K562 (cell line): ENCODE measurements at regions of chr22 and their contacts with region 1.

Region 1: DNA sequence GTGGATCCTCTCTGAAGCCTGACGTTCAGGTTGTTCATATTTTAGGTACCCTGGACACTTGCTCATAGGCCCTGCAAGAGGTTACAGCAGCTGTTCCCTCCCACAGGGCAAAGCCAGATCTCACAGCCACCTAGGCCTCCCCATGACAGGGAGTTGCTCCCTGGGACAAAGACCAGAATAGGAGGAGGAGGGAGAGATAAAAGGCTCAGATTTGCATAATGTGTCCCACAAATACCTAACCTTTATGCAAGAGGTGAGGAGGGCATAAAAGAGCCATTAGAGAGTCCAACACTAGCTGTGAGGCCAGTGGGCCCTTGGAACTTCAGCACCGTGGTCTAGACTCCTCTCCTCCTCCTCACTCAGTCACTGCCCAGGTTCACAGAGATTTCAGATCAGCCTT is 33.8 kb downstream of the ZNF280B start:
- DNase-seq: peak in 2 of 4 experiments; percentile 46 to 47
- ATAC-seq: peak; percentile 61
- H3K4me3 ChIP-seq: no peak overlapping the region
- H3K27ac ChIP-seq: no peak overlapping the region
- H3K4me1 ChIP-seq: peaks cover 0 to 7% of the 10 kb centered on the region in 2 experiments; a peak in 2 of 5 replicates
- H3K27me3 ChIP-seq: peaks cover 9 to 18% of the 10 kb centered on the region in 2 experiments
- CTCF ChIP-seq: no peak
- EP300 ChIP-seq: no peak
- POLR2A ChIP-seq: no peak
- RAD21 ChIP-seq: no peak

Region 2: DNA sequence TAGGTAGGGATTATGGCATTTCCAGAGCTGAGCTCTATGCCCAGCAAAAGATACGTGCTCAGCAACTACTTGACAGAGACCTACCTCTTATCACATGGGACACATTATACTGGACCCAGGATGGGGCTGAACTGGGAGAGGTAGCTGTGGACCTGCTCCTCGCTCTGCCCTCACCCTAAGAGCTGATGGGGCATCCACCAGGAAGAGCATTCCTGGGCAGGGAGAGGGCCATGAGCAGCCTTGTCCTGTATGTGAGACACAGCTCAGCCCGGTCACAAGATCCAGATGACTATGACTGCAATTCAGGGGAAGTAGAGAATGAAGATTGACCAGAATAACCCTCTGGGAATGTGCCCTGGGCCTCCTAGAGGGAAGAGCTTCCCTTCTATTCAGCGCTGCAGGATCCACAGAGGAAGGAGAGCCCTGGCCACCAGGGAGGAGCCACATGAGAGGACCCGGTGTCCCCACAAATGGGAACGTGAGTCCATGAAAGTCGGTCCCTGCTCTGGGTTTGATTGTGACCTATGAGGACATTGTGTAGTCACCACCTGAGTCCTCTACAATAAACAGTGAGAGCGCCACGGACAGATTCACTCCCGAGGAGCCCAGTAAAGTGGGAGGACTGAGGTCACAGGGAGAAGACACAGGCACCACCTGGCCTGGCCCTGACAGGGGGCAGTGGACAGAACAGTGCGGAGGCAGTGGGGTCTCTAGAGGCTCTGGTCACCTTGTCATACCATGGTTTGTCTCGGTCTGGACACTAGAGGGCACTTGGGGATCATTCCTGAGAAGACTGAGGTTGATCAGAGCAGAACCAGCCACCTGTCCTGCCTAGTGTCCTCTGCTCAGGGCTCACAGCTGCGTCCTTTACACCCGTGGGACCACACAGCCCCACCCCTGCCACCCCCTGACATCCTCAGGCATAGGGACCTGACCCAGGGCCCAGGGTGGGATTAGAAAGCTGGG is 65.7 kb before region 1 on chr22:
- CTCF ChIA-PET with region 1: no interaction called
- POLR2A ChIA-PET with region 1: no interaction called
- in situ Hi-C with region 1: no loop called
- intact Hi-C with region 1: no loop called
- DNase-seq: peak; percentile 86 to 91 (median 87)
- ATAC-seq: peak; percentile 98
- H3K4me3 ChIP-seq: no peak overlapping the region
- H3K27ac ChIP-seq: no peak overlapping the region
- H3K4me1 ChIP-seq: no peaks in the 10 kb centered on the region
- H3K27me3 ChIP-seq: peaks cover 21 to 49% of the 10 kb centered on the region in 2 experiments; a peak in 4 of 5 replicates
- CTCF ChIP-seq: peak in 2 of 3 experiments; percentile 98 to 99; a peak in 4 of 6 replicates
- EP300 ChIP-seq: no peak
- POLR2A ChIP-seq: no peak
- RAD21 ChIP-seq: no peak

Region 3: DNA sequence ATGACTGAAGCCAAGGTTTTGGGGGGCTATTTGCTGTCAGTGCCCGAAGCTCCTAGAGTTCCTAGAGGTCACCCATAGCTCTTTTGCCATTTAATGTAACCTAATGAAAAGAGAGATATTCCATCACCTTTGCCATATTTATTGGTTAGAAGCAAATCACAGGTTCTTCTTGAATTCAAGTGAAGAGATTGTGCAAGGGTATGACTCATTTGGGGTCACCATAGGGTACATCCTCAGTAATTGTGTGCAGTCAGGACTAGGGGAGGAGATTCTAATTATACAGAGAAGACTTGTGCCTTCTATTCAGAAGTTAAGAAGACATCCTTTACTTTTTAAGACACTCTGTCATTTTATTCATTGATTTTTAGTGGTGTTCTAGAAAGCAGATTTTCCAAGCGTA is 91.2 kb after region 1 on chr22:
- CTCF ChIA-PET with region 1: no interaction called
- POLR2A ChIA-PET with region 1: interaction called, 3 read pairs
- in situ Hi-C with region 1: loop called (anchors 5 kb)
- intact Hi-C with region 1: no loop called
- DNase-seq: no peak
- ATAC-seq: no peak
- H3K4me3 ChIP-seq: no peak overlapping the region
- H3K27ac ChIP-seq: no peak overlapping the region
- H3K4me1 ChIP-seq: no peaks in the 10 kb centered on the region; a peak in 1 of 5 replicates
- H3K27me3 ChIP-seq: peaks cover 45 to 49% of the 10 kb centered on the region in 2 experiments
- CTCF ChIP-seq: no peak
- EP300 ChIP-seq: no peak
- POLR2A ChIP-seq: no peak
- RAD21 ChIP-seq: no peak